GM13976 (cell line): ENCODE measurements at regions of chr2 and their contacts with region 1.

Region 1: DNA sequence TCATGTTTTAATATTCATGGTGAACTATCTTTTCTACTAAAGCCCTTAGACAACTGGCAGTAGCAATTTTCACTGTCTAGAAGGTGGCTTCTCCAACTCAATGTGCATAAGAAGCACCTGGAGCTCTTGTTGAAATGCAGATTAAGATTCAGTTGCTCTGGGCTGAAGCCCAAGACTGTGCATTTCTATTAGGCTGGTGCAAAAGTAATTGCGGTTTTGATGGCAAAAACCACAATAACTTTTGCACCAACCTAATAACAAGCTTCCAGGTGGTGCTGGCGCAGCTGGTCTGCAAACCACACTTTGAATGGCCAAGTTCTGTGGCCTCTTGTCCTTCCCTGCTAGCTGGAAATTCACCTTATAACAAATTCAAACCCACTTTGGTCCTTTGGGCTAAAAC is 26.7 kb upstream of the VPS54 start:
- DNase-seq: no peak
- CTCF ChIP-seq: no peak

Region 2: GRCh38 chr2:63500398-63500797 is 545.5 kb before region 1 on chr2:
- in situ Hi-C with region 1: no loop called
- DNase-seq: no peak
- CTCF ChIP-seq: no peak

Region 3: GRCh38 chr2:64488050-64488974 is 442.4 kb after region 1 on chr2:
- in situ Hi-C with region 1: loop called (anchors 5 kb)
- DNase-seq: peak; percentile 69
- CTCF ChIP-seq: peak; percentile 91